ENCODE measurements at regions of chr2 and their contacts with region 1.

Region 1: DNA sequence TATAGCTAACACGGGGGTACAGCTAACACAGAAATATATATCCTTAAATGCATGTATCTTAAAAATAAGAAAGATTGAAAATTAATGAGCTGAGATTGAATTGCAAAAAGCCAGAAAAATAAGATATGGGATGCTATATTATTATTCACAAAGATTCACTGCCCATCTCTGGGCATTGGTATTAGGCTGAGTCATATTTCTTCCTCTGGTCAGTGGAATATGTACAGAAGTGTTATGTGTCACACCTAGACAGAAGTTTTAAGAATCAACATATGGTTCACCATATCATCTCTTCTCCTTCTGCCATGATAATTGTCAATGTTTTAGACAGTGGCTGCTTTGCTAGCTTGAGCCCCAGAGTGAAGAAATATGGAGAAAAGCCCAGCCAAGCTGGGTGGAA is 14.0 kb upstream of the MCFD2 start:
- DNase-seq: no peak
- CTCF ChIP-seq: no peak

Region 2: GRCh38 chr2:46917628-46918027 is 12.0 kb before region 1 on chr2:
- CTCF ChIA-PET with region 1: interaction called, 40 read pairs
- POLR2A ChIA-PET with region 1: no interaction called
- DNase-seq: no peak
- CTCF ChIP-seq: no peak

Region 3: GRCh38 chr2:47221956-47222355 is 292.3 kb after region 1 on chr2:
- CTCF ChIA-PET with region 1: no interaction called
- POLR2A ChIA-PET with region 1: no interaction called
- DNase-seq: no peak
- CTCF ChIP-seq: no peak

Measured in GM10248 (cell line).